CD4-positive, alpha-beta T cell (primary cell): ENCODE measurements at regions of chr7 and their contacts with region 1.

Region 1: DNA sequence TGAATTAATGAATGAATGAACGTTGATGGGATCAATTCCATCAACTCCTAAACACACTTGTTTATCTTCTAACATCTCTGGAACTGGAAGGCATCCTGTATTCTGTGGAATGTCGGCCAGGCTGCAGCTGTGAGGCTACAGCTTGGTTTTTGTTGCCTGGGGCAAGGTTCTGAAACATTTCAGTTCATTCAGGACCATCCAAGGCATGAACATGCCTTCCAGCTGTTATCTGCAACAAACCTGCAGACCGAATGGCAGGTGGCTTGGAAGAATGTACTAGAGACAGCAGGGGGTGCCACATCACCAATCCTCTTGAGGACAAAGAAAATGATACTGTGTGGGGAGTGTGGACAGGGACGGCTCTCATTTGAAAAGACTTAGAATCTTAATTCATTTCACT is 12.5 kb downstream of the PAPOLB start:
- DNase-seq: peak in 4 of 14 experiments; percentile 23 to 45 (median 32)
- ATAC-seq: no peak
- H3K4me3 ChIP-seq: no peak overlapping the region
- H3K4me3 Mint-ChIP-seq: no peak overlapping the region
- H3K27ac ChIP-seq: no peak overlapping the region
- H3K27ac Mint-ChIP-seq: no peak overlapping the region
- H3K4me1 ChIP-seq: peaks cover 4% of the 10 kb centered on the region
- H3K4me1 Mint-ChIP-seq: no peaks in the 10 kb centered on the region
- H3K27me3 ChIP-seq: peaks cover 5 to 8% of the 10 kb centered on the region in 2 experiments
- H3K27me3 Mint-ChIP-seq: peaks cover 13% of the 10 kb centered on the region
- CTCF ChIP-seq: peak; percentile 27

Region 2: GRCh38 chr7:5088906-5089305 is 239.5 kb after region 1 on chr7:
- CTCF ChIA-PET with region 1: no interaction called
- POLR2A ChIA-PET with region 1: no interaction called
- intact Hi-C with region 1: loop called in 1 of 2 experiments (anchors 5 kb)
- DNase-seq: no peak
- ATAC-seq: no peak
- H3K4me3 ChIP-seq: no peak overlapping the region
- H3K4me3 Mint-ChIP-seq: no peak overlapping the region
- H3K27ac ChIP-seq: no peak overlapping the region
- H3K27ac Mint-ChIP-seq: no peak overlapping the region
- H3K4me1 ChIP-seq: peaks cover 6% of the 10 kb centered on the region
- H3K4me1 Mint-ChIP-seq: no peaks in the 10 kb centered on the region
- H3K27me3 ChIP-seq: peaks cover 0 to 7% of the 10 kb centered on the region in 2 experiments
- H3K27me3 Mint-ChIP-seq: no peaks in the 10 kb centered on the region
- CTCF ChIP-seq: no peak